CD8-positive, alpha-beta T cell (primary cell): ENCODE measurements at regions of chr1 and their contacts with region 1.

Region 1: GRCh38 chr1:116794804-116795481 is 40.7 kb downstream of the CD2 start:
- DNase-seq: no peak
- ATAC-seq: no peak
- H3K4me3 ChIP-seq: no peak overlapping the region
- H3K4me3 Mint-ChIP-seq: no peak overlapping the region
- H3K27ac ChIP-seq: peak overlapping the region in 1 of 2 experiments; percentile 22
- H3K27ac Mint-ChIP-seq: peak overlapping the region; percentile 50
- H3K4me1 ChIP-seq: peaks cover 26% of the 10 kb centered on the region
- H3K4me1 Mint-ChIP-seq: peaks cover 54% of the 10 kb centered on the region
- H3K27me3 ChIP-seq: no peaks in the 10 kb centered on the region
- H3K27me3 Mint-ChIP-seq: no peaks in the 10 kb centered on the region
- CTCF ChIP-seq: no peak

Region 2: GRCh38 chr1:116711263-116711840 is 83.6 kb before region 1 on chr1:
- CTCF ChIA-PET with region 1: no interaction called
- POLR2A ChIA-PET with region 1: no interaction called
- intact Hi-C with region 1: no loop called
- DNase-seq: peak in 1 of 9 experiments; percentile 9
- ATAC-seq: no peak
- H3K4me3 ChIP-seq: no peak overlapping the region
- H3K4me3 Mint-ChIP-seq: no peak overlapping the region
- H3K27ac ChIP-seq: no peak overlapping the region
- H3K27ac Mint-ChIP-seq: no peak overlapping the region
- H3K4me1 ChIP-seq: no peaks in the 10 kb centered on the region
- H3K4me1 Mint-ChIP-seq: no peaks in the 10 kb centered on the region
- H3K27me3 ChIP-seq: no peaks in the 10 kb centered on the region
- H3K27me3 Mint-ChIP-seq: peaks cover 7% of the 10 kb centered on the region
- CTCF ChIP-seq: no peak

Region 3: GRCh38 chr1:116777831-116778830 is 16.8 kb before region 1 on chr1:
- CTCF ChIA-PET with region 1: no interaction called
- POLR2A ChIA-PET with region 1: interaction called, 3 read pairs
- intact Hi-C with region 1: loop called (anchors 1 to 2 kb)
- DNase-seq: no peak
- ATAC-seq: peak; percentile 48
- H3K4me3 ChIP-seq: no peak overlapping the region
- H3K4me3 Mint-ChIP-seq: no peak overlapping the region
- H3K27ac ChIP-seq: no peak overlapping the region
- H3K27ac Mint-ChIP-seq: peak overlapping the region; percentile 35
- H3K4me1 ChIP-seq: peaks cover 13% of the 10 kb centered on the region
- H3K4me1 Mint-ChIP-seq: peaks cover 29% of the 10 kb centered on the region
- H3K27me3 ChIP-seq: no peaks in the 10 kb centered on the region
- H3K27me3 Mint-ChIP-seq: no peaks in the 10 kb centered on the region
- CTCF ChIP-seq: no peak